ENCODE measurements at regions of chr1 and their contacts with region 1.

Region 1: GRCh38 chr1:244325056-244325764 is 126.5 kb downstream of the ADSS2 start:
- DNase-seq: peak; percentile 39
- ATAC-seq: peak; percentile 87
- H3K4me3 Mint-ChIP-seq: peak overlapping the region; percentile 74
- H3K27ac Mint-ChIP-seq: peak overlapping the region; percentile 88
- H3K4me1 Mint-ChIP-seq: peaks cover 24% of the 10 kb centered on the region
- H3K27me3 Mint-ChIP-seq: no peaks in the 10 kb centered on the region

Region 2: GRCh38 chr1:243642936-243643335 is 682.3 kb before region 1 on chr1:
- CTCF ChIA-PET with region 1: no interaction called
- POLR2A ChIA-PET with region 1: no interaction called
- intact Hi-C with region 1: no loop called
- DNase-seq: no peak
- ATAC-seq: no peak
- H3K4me3 Mint-ChIP-seq: no peak overlapping the region
- H3K27ac Mint-ChIP-seq: no peak overlapping the region
- H3K4me1 Mint-ChIP-seq: no peaks in the 10 kb centered on the region
- H3K27me3 Mint-ChIP-seq: no peaks in the 10 kb centered on the region

Region 3: GRCh38 chr1:243996223-243996622 is 329.0 kb before region 1 on chr1:
- CTCF ChIA-PET with region 1: no interaction called
- POLR2A ChIA-PET with region 1: no interaction called
- intact Hi-C with region 1: no loop called
- DNase-seq: no peak
- ATAC-seq: no peak
- H3K4me3 Mint-ChIP-seq: no peak overlapping the region
- H3K27ac Mint-ChIP-seq: no peak overlapping the region
- H3K4me1 Mint-ChIP-seq: no peaks in the 10 kb centered on the region
- H3K27me3 Mint-ChIP-seq: no peaks in the 10 kb centered on the region

Region 4: DNA sequence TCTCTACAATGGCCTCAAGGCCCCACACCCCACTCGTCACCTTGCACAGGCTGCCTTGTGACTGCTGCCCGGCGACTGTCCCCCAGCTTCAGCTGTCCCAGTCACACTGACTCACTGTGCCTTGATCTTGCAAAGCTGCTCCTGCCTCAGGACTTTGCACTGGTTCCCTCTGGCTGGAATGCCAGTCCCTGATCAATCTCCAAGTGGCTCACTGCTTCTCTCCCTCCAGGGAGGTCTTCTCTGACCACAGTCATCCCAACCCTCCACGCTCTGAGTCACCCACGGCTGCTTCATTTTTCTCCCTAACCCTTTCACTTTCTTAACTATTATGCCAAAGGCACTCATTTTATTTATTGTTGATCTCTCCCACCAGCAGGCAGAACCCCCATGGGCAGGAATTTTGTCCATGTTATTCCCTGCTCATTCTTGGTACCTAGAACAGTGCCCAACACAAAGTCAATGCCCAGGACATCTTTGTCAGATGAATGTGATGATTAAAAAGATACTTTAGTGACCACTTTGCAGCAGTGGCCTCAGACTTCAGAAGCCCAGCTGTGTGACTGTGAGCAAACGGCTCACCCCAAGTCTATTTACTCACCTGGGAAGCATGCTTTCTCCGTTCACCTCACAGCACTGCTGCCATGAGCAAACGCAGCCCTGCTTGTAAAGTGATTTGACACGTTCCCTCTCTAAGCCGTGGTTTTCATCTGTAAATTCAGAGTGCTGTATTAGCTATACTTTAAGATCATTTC is 220.7 kb before region 1 on chr1:
- CTCF ChIA-PET with region 1: no interaction called
- POLR2A ChIA-PET with region 1: no interaction called
- intact Hi-C with region 1: no loop called
- DNase-seq: no peak
- ATAC-seq: no peak
- H3K4me3 Mint-ChIP-seq: no peak overlapping the region
- H3K27ac Mint-ChIP-seq: no peak overlapping the region
- H3K4me1 Mint-ChIP-seq: peaks cover 10% of the 10 kb centered on the region
- H3K27me3 Mint-ChIP-seq: peaks cover 2% of the 10 kb centered on the region

Region 5: DNA sequence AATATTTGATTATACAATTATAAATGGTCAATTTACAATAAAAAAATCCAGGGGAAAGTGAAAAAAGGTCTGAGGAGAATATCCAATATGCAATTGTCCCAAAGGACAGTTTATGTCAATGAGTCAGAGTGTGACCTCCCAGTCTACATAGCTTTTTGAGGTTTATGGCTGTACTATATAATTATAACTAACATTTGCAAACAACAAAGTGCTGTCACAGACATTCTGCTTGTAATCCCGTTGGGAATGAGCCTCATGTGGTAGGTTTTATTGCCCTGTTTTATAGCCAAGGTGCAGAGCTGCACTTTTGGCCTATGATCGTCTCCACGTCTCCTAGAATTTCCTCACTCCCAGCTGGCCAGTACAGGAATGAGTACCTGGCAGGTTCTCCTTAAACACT is 22.7 kb after region 1 on chr1:
- CTCF ChIA-PET with region 1: no interaction called
- POLR2A ChIA-PET with region 1: no interaction called
- intact Hi-C with region 1: loop called (anchors 1 to 2 kb)
- DNase-seq: no peak
- ATAC-seq: no peak
- H3K4me3 Mint-ChIP-seq: no peak overlapping the region
- H3K27ac Mint-ChIP-seq: no peak overlapping the region
- H3K4me1 Mint-ChIP-seq: peaks cover 15% of the 10 kb centered on the region
- H3K27me3 Mint-ChIP-seq: no peaks in the 10 kb centered on the region

Region 6: DNA sequence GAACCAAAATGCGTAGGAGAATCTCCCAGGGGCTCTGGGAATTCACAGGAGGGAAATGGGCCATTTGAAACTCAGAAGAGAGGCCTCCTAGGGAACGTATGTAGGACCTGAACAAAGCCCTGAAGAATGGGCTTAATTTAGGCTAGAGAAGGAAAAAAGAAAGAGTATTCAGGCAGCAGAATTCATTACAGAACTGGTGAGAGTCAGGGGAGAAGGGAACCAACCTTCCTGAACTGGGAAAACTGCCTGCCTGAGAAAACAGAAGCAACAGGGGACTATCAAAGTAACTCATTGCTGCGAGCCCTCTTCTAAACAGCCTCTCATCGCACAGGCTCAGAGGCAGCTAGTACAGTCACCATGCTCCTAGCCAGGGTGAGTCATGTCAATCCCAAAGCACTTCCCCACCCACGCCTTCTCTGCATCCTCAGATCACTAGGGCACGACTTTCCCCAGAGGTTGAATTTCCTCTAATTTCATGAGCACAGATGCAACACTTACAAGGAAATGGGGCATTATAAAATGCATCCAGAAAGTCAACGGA is 28.4 kb after region 1 on chr1:
- CTCF ChIA-PET with region 1: no interaction called
- POLR2A ChIA-PET with region 1: no interaction called
- intact Hi-C with region 1: loop called in 1 of 2 experiments (anchors 2 kb)
- DNase-seq: peak; percentile 55
- ATAC-seq: peak; percentile 63
- H3K4me3 Mint-ChIP-seq: no peak overlapping the region
- H3K27ac Mint-ChIP-seq: peak overlapping the region; percentile 37
- H3K4me1 Mint-ChIP-seq: peaks cover 28% of the 10 kb centered on the region
- H3K27me3 Mint-ChIP-seq: no peaks in the 10 kb centered on the region

Region 7: GRCh38 chr1:245290836-245291235 is 965.6 kb after region 1 on chr1:
- CTCF ChIA-PET with region 1: no interaction called
- POLR2A ChIA-PET with region 1: no interaction called
- intact Hi-C with region 1: no loop called
- DNase-seq: no peak
- ATAC-seq: no peak
- H3K4me3 Mint-ChIP-seq: no peak overlapping the region
- H3K27ac Mint-ChIP-seq: no peak overlapping the region
- H3K4me1 Mint-ChIP-seq: no peaks in the 10 kb centered on the region
- H3K27me3 Mint-ChIP-seq: peaks cover 4% of the 10 kb centered on the region

Measured in activated CD4-positive, alpha-beta T cell treated with anti-CD3 and anti-CD28 coated beads for 36 hours (primary cell).